Transverse colon (tissue), 4 donors: ENCODE measurements at regions of chr5 and their contacts with region 1.

Region 1: GRCh38 chr5:41754857-41755256 is 115.4 kb downstream of the OXCT1 start:
- DNase-seq: no peak
- H3K4me3 ChIP-seq: no peak overlapping the region
- H3K27ac ChIP-seq: no peak overlapping the region
- H3K4me1 ChIP-seq: peaks cover 0 to 14% (median 5%) of the 10 kb centered on the region in 4 donors
- H3K27me3 ChIP-seq: no peaks in the 10 kb centered on the region
- CTCF ChIP-seq: peak in 3 of 5 experiments; percentile 14 to 17 (median 15)
- EP300 ChIP-seq: no peak
- POLR2A ChIP-seq: no peak

Region 2: GRCh38 chr5:39992617-39993203 is 1762.1 kb before region 1 on chr5:
- in situ Hi-C with region 1: no loop called
- intact Hi-C with region 1: loop called (anchors 10 kb)
- DNase-seq: no peak
- H3K4me3 ChIP-seq: no peak overlapping the region
- H3K27ac ChIP-seq: no peak overlapping the region
- H3K4me1 ChIP-seq: no peaks in the 10 kb centered on the region
- H3K27me3 ChIP-seq: no peaks in the 10 kb centered on the region
- CTCF ChIP-seq: no peak
- EP300 ChIP-seq: no peak
- POLR2A ChIP-seq: no peak